Heart left ventricle (tissue), 16 donors: ENCODE measurements at regions of chr10 and their contacts with region 1.

Region 1: DNA sequence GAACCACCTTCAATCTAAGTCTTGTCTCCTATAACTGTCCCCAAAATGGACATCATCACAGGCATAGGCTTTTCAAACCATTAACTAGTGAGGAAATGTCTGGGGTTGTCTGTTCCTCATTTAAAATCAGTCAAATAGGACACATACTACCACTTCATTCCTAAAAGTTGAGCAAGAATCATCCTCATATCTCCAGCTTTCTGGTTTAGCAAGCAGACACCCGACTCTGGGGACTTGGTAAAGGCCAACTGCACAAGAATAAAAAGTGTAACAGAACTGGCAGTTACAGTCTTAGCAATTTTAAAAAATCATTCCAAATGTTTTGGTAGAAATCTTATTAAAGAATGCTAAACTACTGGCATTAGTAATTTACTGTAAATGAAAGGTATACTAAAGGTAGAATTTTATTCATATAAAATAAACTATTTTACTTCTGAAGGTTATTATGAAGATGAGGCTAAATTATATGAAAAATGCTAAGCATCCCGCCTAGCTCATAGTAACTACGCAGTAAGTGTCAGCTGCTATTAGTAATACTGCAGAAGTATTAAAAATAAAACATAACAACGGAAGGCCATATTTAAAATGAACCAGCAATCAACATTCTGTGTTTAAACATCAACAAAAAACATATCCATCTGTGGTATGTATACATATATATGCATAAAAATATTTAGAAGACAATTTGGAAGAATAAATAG is 60.8 kb downstream of the ZNF438 start:
- DNase-seq: peak in 1 of 5 donors; percentile 32
- ATAC-seq: peak in 3 of 4 donors; percentile 25 to 72 (median 65)
- H3K4me3 ChIP-seq: peak overlapping the region in 1 of 12 donors; percentile 1
- H3K27ac ChIP-seq: peak overlapping the region; percentile 19 to 80 (median 45)
- H3K4me1 ChIP-seq: peaks cover 2 to 76% (median 33%) of the 10 kb centered on the region in 12 donors
- H3K27me3 ChIP-seq: no peaks in the 10 kb centered on the region
- CTCF ChIP-seq: no peak
- POLR2A ChIP-seq: no peak

Region 2: GRCh38 chr10:30687698-30688219 is 283.2 kb before region 1 on chr10:
- intact Hi-C with region 1: no loop called
- DNase-seq: peak; percentile 54 to 83 (median 62)
- ATAC-seq: peak in 3 of 4 donors; percentile 71 to 76 (median 74)
- H3K4me3 ChIP-seq: no peak overlapping the region
- H3K27ac ChIP-seq: no peak overlapping the region
- H3K4me1 ChIP-seq: peaks cover 0 to 3% (median 0%) of the 10 kb centered on the region in 12 donors
- H3K27me3 ChIP-seq: peaks cover 0 to 24% (median 0%) of the 10 kb centered on the region in 9 donors
- CTCF ChIP-seq: peak; percentile 63 to 95 (median 83)
- POLR2A ChIP-seq: no peak

Region 3: DNA sequence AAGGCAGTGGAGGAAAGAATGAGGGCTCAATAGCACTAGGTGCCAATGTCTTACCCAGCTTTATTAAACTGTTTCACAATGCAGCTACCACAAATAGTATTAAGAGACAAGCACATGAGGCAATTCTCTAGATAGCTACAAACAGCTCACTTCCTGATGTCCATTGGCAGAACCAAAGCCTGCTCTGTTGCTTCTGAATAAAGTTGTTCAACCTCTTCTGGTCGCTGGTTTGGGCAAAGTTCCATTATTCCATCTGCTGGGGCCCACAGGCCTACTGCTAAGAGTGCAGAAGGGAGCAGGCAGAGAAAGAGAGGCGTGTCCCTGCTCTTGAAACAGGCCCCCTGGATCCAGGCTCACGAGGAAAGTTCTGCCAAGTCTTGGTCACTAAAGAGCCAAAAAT is 113.1 kb before region 1 on chr10:
- intact Hi-C with region 1: loop called in 1 of 10 experiments (anchors 5 kb)
- DNase-seq: peak; percentile 71 to 87 (median 76)
- ATAC-seq: peak; percentile 81 to 96 (median 90)
- H3K4me3 ChIP-seq: no peak overlapping the region
- H3K27ac ChIP-seq: peak overlapping the region; percentile 23 to 78 (median 65)
- H3K4me1 ChIP-seq: peaks cover 0 to 63% (median 29%) of the 10 kb centered on the region in 12 donors
- H3K27me3 ChIP-seq: no peaks in the 10 kb centered on the region
- CTCF ChIP-seq: no peak
- POLR2A ChIP-seq: no peak